HEK293 (cell line): ENCODE measurements at regions of chr2 and their contacts with region 1.

Region 1: GRCh38 chr2:231662028-231662810 is 46.1 kb upstream of the PTMA start:
- H3K4me3 ChIP-seq: no peak overlapping the region
- H3K27ac ChIP-seq: peak overlapping the region; percentile 13; the same call in 1 of the 2 replicates
- H3K4me1 ChIP-seq: 0 out of 2 replicates have a peak, but pooled peaks cover 3% of the 10 kb centered on the region
- CTCF ChIP-seq: no peak

Region 2: DNA sequence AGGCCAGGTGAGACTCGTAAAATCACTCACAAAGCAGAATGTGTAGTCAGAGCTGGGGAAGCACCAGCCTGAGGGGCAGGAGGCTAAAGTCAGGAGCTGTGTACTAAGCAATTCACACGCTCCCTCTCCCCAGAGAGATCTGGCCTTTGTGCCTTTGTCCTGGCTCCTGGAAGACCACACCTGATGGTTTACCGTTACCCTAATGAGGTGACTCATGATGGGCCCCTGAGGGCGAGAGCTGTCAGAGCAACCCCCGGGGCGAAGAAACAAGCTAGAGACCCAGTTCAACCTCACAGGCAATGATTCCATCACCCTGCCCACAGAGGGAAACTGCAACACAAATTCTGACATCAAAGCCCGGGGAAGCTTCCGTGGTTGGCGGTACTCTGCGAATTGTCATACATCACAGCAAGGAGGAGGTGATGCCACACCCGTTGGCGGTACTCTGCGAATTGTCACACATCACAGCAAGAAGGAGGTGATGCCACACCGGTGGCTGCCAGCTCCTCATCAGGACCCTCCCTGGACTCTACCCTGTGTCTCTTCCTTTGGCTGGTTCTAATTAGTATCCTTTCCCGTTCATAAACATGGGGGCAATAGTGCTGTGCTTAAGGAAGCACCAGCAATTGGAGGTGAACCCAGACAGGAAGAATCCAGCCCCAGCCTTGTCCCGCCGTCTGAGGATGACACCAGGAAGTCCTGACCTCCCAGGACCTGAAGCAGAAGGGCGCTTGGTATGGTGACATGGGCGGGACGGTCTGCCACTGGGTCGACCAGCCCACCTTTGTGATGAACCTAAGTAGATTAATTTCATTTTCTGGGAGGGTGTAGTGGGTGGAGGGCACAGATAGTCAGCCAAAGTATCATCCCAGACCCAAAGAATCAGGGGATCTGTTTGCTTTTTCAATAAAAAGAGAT is 236.1 kb before region 1 on chr2:
- CTCF ChIA-PET with region 1: no interaction called
- POLR2A ChIA-PET with region 1: no interaction called
- H3K4me3 ChIP-seq: no peak overlapping the region
- H3K27ac ChIP-seq: no peak overlapping the region
- H3K4me1 ChIP-seq: no peaks in the 10 kb centered on the region
- CTCF ChIP-seq: no peak

Region 3: GRCh38 chr2:231642631-231643494 is 19.4 kb before region 1 on chr2:
- CTCF ChIA-PET with region 1: interaction called, 4 read pairs
- POLR2A ChIA-PET with region 1: interaction called, 13 read pairs
- H3K4me3 ChIP-seq: peak overlapping the region; percentile 13; the same call in 1 of the 2 replicates
- H3K27ac ChIP-seq: no peak overlapping the region
- H3K4me1 ChIP-seq: no peaks in the 10 kb centered on the region
- CTCF ChIP-seq: no peak

Region 4: GRCh38 chr2:231732604-231733003 is 70.4 kb after region 1 on chr2:
- CTCF ChIA-PET with region 1: no interaction called
- POLR2A ChIA-PET with region 1: no interaction called
- H3K4me3 ChIP-seq: no peak overlapping the region
- H3K27ac ChIP-seq: no peak overlapping the region
- H3K4me1 ChIP-seq: no peaks in the 10 kb centered on the region
- CTCF ChIP-seq: no peak

Region 5: GRCh38 chr2:232455426-232456255 is 793.4 kb after region 1 on chr2 and contains the start of gene ALPI:
- CTCF ChIA-PET with region 1: no interaction called
- POLR2A ChIA-PET with region 1: no interaction called
- H3K4me3 ChIP-seq: no peak within 1 kb of the TSS
- H3K27ac ChIP-seq: no peak within 1 kb of the TSS
- H3K4me1 ChIP-seq: no peaks in the 10 kb centered on the region
- CTCF ChIP-seq: no peak